ENCODE measurements at regions of chr17 and their contacts with region 1.

Region 1: DNA sequence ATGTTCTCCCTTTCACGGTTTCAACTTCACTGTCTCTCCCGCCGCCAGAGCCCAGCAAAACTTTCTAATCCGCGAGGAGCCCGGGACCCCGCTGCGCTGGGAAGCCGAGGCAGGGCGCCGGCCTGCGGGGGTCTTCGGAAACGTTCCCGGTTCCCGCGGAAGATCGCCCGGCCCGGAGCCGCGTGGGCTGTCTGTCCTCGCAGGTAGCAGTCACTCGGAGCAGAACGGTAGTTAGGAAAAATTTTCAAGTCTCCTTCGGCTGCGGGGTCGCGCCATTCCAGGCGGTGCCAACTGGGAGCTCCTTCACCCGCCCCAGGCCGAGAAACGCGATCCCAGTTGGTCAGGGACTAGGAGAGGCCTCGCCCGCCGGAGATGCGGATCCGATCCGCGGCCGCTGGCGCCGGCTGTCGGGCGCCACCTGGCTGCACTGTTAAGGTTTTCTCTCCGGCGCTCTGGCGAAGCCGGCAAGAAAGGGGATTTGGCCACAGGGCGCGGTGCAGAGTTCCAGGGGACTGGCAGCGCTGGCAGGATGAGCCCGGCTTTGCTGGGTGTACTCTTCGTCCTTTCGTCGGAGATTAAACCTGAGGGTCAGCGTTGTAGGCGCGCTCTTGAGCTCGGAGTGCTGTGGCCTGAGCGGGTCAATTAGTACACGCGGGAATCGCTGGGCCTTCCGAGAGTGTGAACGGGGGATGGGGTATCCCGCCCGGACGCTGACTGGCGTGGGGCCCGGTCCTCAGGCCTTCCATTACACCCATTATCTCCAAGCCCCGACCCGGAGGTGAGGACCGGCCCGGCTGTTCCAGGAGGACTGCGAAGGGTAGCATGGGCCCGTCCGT is 135.4 kb downstream of the KCNJ12 start:
- DNase-seq: peak; percentile 84 to 90
- H3K4me3 ChIP-seq: peak overlapping the region; percentile 54 to 71
- H3K27ac ChIP-seq: peak overlapping the region; percentile 65 to 68
- H3K4me1 ChIP-seq: peaks cover 0 to 16% (median 10%) of the 10 kb centered on the region in 4 donors
- H3K27me3 ChIP-seq: peaks cover 0 to 1% of the 10 kb centered on the region in 2 donors
- CTCF ChIP-seq: peak; percentile 71 to 77

Region 2: GRCh38 chr17:21119919-21120249 is 391.7 kb before region 1 on chr17:
- intact Hi-C with region 1: loop called (anchors 2 kb)
- DNase-seq: no peak
- H3K4me3 ChIP-seq: no peak overlapping the region
- H3K27ac ChIP-seq: peak overlapping the region; percentile 22 to 54
- H3K4me1 ChIP-seq: peaks cover 0 to 15% (median 0%) of the 10 kb centered on the region in 4 donors
- H3K27me3 ChIP-seq: no peaks in the 10 kb centered on the region
- CTCF ChIP-seq: no peak

Region 3: DNA sequence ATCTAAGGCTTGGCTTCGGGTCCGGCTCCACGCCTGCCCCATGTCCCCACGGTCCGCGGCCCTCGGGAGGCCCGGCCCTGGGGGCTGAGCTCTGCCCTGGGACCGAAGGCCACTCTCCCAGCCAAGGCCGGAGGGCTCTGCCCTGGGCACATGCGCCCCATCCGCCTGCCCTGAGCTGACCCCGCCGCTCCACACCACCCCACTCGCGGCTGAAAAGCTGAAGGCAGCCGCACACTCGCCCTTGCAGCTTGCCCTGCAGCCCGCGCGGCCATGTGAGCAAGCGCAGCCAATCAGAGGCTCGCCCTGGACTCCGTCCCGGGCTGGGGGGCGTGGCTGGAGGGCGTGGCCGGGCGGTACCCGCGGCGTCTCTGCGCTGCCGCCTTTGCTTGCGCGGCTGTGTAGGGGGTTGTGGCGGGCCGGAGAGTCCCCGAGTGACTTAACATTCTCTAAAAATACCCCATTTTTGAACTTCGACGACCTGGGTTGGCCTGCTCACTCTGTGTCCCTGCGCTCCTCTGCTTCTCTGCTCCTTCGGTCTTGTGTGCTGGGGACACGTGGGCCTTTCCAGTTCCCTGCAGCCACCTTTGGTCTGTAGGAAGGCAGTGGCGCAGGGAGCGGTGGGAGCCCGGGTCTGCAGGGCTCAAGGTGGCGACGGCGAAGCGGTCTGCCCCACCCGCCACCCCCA is 235.9 kb before region 1 on chr17:
- intact Hi-C with region 1: loop called (anchors 5 kb)
- DNase-seq: peak; percentile 91 to 95
- H3K4me3 ChIP-seq: peak overlapping the region; percentile 53 to 71
- H3K27ac ChIP-seq: peak overlapping the region; percentile 35 to 56
- H3K4me1 ChIP-seq: peaks cover 0 to 40% (median 17%) of the 10 kb centered on the region in 4 donors
- H3K27me3 ChIP-seq: no peaks in the 10 kb centered on the region
- CTCF ChIP-seq: no peak

Region 4: DNA sequence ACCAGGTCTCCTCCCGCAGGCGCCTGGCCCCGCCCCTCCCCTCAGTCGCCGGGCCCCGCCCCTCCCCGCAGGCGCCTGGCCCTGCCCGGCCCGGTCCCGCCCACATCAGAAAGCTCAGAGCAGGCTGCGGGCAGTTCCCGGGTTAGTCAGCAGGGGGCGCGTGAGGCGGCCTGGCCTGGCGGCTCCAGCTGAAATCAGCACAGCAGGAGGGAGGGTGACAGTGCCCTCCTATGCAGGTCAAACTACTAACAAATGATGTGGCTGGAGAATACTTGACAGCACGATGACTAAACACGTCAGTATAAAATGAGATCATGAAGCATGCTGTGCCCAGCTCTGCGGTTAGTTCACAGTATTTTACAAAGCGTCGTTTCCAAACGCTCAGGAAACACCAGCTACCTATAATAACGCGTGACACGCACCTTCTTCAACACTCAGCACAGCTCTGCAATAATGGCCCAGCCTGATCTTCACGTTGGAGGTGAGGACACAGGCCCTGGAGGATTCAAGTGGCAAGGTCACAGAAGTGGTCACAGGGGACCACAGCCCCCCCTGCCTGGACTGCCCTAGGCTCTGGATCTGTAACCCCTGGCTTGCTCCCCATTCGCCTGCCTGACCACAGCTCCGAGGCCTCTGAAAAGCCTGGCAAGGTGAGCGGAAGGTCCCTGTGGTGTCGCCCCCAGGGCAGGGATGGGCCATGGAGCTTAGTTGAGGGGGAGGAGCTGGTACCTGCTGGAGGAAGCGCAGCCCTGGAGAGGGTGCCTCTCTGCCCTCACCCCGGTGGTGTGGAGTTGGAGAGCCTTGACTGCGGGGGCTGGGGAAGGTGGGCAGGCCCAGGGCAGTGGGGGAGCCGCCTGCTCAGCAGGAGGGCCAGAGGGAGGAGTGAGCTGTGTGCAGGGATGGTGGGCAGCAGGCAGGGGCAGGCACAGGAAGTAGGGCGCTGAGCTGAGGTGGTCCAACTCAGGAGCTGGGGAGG is 54.2 kb before region 1 on chr17:
- intact Hi-C with region 1: loop called (anchors 5 kb)
- DNase-seq: peak; percentile 77 to 91
- H3K4me3 ChIP-seq: no peak overlapping the region
- H3K27ac ChIP-seq: peak overlapping the region in 1 of 2 donors; percentile 13
- H3K4me1 ChIP-seq: peaks cover 0 to 25% (median 16%) of the 10 kb centered on the region in 4 donors
- H3K27me3 ChIP-seq: peaks cover 0 to 3% of the 10 kb centered on the region in 2 donors
- CTCF ChIP-seq: peak; percentile 84 to 97

Region 5: DNA sequence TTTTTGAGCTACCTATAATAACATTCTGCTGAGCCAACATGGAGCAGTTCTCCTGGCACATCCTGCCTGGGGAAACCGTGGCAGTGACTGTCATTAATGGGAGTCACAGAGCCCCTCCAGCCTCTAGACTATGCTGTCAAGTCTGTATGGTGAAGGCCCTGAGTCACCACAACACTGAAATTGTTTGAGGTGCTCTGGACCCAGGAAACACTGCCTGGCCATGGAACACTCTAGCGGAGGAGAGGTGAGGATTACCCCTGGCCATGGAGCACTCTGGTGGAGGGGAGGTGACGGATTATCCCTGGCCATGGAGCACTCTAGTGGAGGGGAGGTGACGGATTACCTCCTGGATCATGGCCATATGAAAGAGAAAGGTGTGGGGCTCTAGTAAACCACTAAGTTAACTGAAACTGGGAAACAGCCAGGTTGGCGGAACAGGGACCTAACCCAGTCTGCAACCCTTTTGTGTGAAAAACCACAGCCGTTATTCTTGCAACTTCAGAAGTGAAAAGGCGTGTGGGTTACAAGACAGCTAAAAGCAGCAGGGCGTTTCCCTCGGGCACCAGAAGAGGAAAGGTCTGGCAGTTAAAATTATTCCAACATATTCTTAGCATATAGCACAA is 21.3 kb after region 1 on chr17:
- intact Hi-C with region 1: no loop called
- DNase-seq: no peak
- H3K4me3 ChIP-seq: no peak overlapping the region
- H3K27ac ChIP-seq: no peak overlapping the region
- H3K4me1 ChIP-seq: no peaks in the 10 kb centered on the region
- H3K27me3 ChIP-seq: no peaks in the 10 kb centered on the region
- CTCF ChIP-seq: no peak